ENCODE measurements at regions of chr6 and their contacts with region 1.

Region 1: DNA sequence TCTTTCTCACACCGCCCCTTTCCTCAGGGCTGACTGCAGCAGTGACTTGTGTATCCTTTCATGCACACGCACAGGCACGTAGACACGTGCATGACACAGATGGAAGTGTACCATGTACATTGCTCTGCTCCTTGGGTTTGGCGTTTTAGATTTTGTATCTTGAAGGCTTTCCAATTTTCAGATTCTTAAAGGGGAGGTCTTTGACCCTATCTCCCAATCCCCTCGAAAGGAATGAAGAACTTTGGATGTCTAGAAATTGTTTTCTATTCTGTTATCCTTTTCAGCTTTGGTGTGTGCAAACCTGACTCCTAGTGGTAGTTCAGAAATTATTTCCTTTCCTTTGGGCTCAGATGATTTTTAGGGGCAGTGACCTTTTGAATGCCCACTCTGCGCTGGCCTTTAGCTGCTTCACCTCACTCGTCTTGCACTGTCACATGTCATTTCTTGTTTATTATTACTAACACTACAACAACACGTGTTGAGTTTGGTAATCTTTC is 63.0 kb downstream of the HIVEP1 start:
- DNase-seq: peak in 6 of 9 donors; percentile 19 to 58 (median 38)
- ATAC-seq: peak; percentile 61
- H3K4me3 ChIP-seq: no peak overlapping the region
- H3K4me3 Mint-ChIP-seq: peak overlapping the region in 8 of 10 donors; percentile 5 to 69 (median 38)
- H3K27ac ChIP-seq: no peak overlapping the region
- H3K27ac Mint-ChIP-seq: peak overlapping the region in 5 of 9 donors; percentile 41 to 60 (median 54)
- H3K4me1 ChIP-seq: peaks cover 0 to 18% of the 10 kb centered on the region in 2 donors
- H3K4me1 Mint-ChIP-seq: peaks cover 31 to 83% (median 68%) of the 10 kb centered on the region in 7 donors
- H3K27me3 ChIP-seq: no peaks in the 10 kb centered on the region
- H3K27me3 Mint-ChIP-seq: no peaks in the 10 kb centered on the region

Region 2: GRCh38 chr6:11414176-11414963 is 660.7 kb before region 1 on chr6:
- CTCF ChIA-PET with region 1: no interaction called
- POLR2A ChIA-PET with region 1: no interaction called
- intact Hi-C with region 1: no loop called
- DNase-seq: peak in 6 of 9 donors; percentile 11 to 30 (median 18)
- ATAC-seq: peak; percentile 77
- H3K4me3 ChIP-seq: no peak overlapping the region
- H3K4me3 Mint-ChIP-seq: no peak overlapping the region
- H3K27ac ChIP-seq: no peak overlapping the region
- H3K27ac Mint-ChIP-seq: peak overlapping the region in 1 of 9 donors; percentile 10
- H3K4me1 ChIP-seq: peaks cover 0 to 4% of the 10 kb centered on the region in 2 donors
- H3K4me1 Mint-ChIP-seq: peaks cover 6 to 45% (median 10%) of the 10 kb centered on the region in 7 donors
- H3K27me3 ChIP-seq: no peaks in the 10 kb centered on the region
- H3K27me3 Mint-ChIP-seq: no peaks in the 10 kb centered on the region

Region 3: GRCh38 chr6:11700118-11700718 is 374.9 kb before region 1 on chr6:
- CTCF ChIA-PET with region 1: interaction called, 5 read pairs
- POLR2A ChIA-PET with region 1: no interaction called
- intact Hi-C with region 1: loop called (anchors 1 kb)
- DNase-seq: peak in 7 of 9 donors; percentile 22 to 63 (median 51)
- ATAC-seq: peak; percentile 60
- H3K4me3 ChIP-seq: no peak overlapping the region
- H3K4me3 Mint-ChIP-seq: no peak overlapping the region
- H3K27ac ChIP-seq: no peak overlapping the region
- H3K27ac Mint-ChIP-seq: peak overlapping the region in 3 of 9 donors; percentile 21 to 66 (median 41)
- H3K4me1 ChIP-seq: peaks cover 0 to 9% of the 10 kb centered on the region in 2 donors
- H3K4me1 Mint-ChIP-seq: peaks cover 10 to 42% (median 35%) of the 10 kb centered on the region in 7 donors
- H3K27me3 ChIP-seq: no peaks in the 10 kb centered on the region
- H3K27me3 Mint-ChIP-seq: no peaks in the 10 kb centered on the region

Region 4: GRCh38 chr6:11722805-11723631 is 352.1 kb before region 1 on chr6:
- CTCF ChIA-PET with region 1: no interaction called
- POLR2A ChIA-PET with region 1: no interaction called
- intact Hi-C with region 1: loop called in 1 of 2 experiments (anchors 1 kb)
- DNase-seq: peak in 5 of 9 donors; percentile 6 to 43 (median 20)
- ATAC-seq: peak; percentile 31
- H3K4me3 ChIP-seq: peak overlapping the region; percentile 12
- H3K4me3 Mint-ChIP-seq: peak overlapping the region; percentile 59 to 93 (median 78)
- H3K27ac ChIP-seq: peak overlapping the region; percentile 60
- H3K27ac Mint-ChIP-seq: peak overlapping the region; percentile 61 to 96 (median 88)
- H3K4me1 ChIP-seq: peaks cover 0 to 63% of the 10 kb centered on the region in 2 donors
- H3K4me1 Mint-ChIP-seq: peaks cover 45 to 86% (median 77%) of the 10 kb centered on the region in 7 donors
- H3K27me3 ChIP-seq: no peaks in the 10 kb centered on the region
- H3K27me3 Mint-ChIP-seq: no peaks in the 10 kb centered on the region

Region 5: DNA sequence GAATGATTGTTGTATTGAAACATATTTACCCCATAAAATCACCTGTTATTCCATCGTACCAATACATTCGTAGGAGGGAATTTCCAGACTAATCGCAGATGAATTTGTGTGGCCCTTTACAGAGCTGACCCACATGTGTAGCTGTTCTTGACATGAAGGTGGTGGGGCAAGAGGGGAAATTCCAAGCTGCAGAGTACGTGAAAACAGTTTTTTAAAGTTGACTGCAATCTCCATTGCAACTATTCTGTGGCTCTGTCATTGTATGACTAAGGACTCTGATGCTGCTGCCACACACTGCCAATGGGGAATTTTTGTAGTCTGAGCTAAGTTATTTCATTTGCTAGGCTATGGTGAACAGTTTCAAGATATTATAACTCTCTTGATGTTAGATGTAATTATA is 250.1 kb before region 1 on chr6:
- CTCF ChIA-PET with region 1: no interaction called
- POLR2A ChIA-PET with region 1: no interaction called
- intact Hi-C with region 1: loop called in 1 of 2 experiments (anchors 1 kb)
- DNase-seq: peak in 1 of 9 donors; percentile 29
- ATAC-seq: peak; percentile 47
- H3K4me3 ChIP-seq: no peak overlapping the region
- H3K4me3 Mint-ChIP-seq: no peak overlapping the region
- H3K27ac ChIP-seq: no peak overlapping the region
- H3K27ac Mint-ChIP-seq: peak overlapping the region in 1 of 9 donors; percentile 65
- H3K4me1 ChIP-seq: no peaks in the 10 kb centered on the region
- H3K4me1 Mint-ChIP-seq: peaks cover 2 to 10% (median 7%) of the 10 kb centered on the region in 7 donors
- H3K27me3 ChIP-seq: no peaks in the 10 kb centered on the region
- H3K27me3 Mint-ChIP-seq: no peaks in the 10 kb centered on the region

Region 6: GRCh38 chr6:12039540-12040459 is 35.3 kb before region 1 on chr6:
- CTCF ChIA-PET with region 1: no interaction called
- POLR2A ChIA-PET with region 1: no interaction called
- intact Hi-C with region 1: loop called in 1 of 2 experiments (anchors 1 kb)
- DNase-seq: no peak
- ATAC-seq: no peak
- H3K4me3 ChIP-seq: no peak overlapping the region
- H3K4me3 Mint-ChIP-seq: peak overlapping the region in 3 of 10 donors; percentile 29 to 74 (median 73)
- H3K27ac ChIP-seq: no peak overlapping the region
- H3K27ac Mint-ChIP-seq: peak overlapping the region; percentile 30 to 83 (median 59)
- H3K4me1 ChIP-seq: peaks cover 0 to 22% of the 10 kb centered on the region in 2 donors
- H3K4me1 Mint-ChIP-seq: peaks cover 45 to 80% (median 71%) of the 10 kb centered on the region in 7 donors
- H3K27me3 ChIP-seq: peaks cover 0 to 3% of the 10 kb centered on the region in 2 donors
- H3K27me3 Mint-ChIP-seq: no peaks in the 10 kb centered on the region

Region 7: DNA sequence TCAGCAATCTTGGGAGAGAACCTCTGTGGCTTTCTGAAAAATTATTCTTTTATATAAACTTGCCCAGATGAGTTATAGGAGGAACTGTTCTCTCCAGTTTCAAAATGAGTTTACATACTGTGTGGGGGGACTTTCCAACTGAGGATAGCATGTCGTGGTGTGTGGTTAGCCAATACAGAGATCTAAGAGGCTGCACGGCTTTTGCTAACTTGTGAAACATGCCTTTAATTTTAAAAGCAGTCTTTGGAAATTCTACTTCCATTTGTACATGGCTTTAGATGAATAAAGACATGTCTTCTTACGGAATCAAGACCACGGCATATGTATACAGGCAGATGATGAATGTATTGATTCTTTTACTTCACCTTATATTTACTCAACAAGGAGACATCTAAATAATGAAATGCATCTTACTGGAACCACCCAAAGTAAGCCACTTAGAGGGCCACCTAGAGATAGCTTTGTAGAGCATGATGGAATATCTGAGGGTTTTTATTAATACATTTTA is 23.2 kb before region 1 on chr6:
- CTCF ChIA-PET with region 1: no interaction called
- POLR2A ChIA-PET with region 1: interaction called, 3 read pairs
- intact Hi-C with region 1: loop called in 1 of 2 experiments (anchors 1 kb)
- DNase-seq: peak in 8 of 9 donors; percentile 46 to 83 (median 75)
- ATAC-seq: peak; percentile 98
- H3K4me3 ChIP-seq: peak overlapping the region; percentile 15
- H3K4me3 Mint-ChIP-seq: peak overlapping the region; percentile 8 to 85 (median 74)
- H3K27ac ChIP-seq: peak overlapping the region; percentile 59
- H3K27ac Mint-ChIP-seq: peak overlapping the region; percentile 70 to 93 (median 88)
- H3K4me1 ChIP-seq: peaks cover 10 to 17% of the 10 kb centered on the region in 2 donors
- H3K4me1 Mint-ChIP-seq: peaks cover 34 to 81% (median 76%) of the 10 kb centered on the region in 7 donors
- H3K27me3 ChIP-seq: no peaks in the 10 kb centered on the region
- H3K27me3 Mint-ChIP-seq: no peaks in the 10 kb centered on the region